GM18951 (cell line): ENCODE measurements at regions of chr22 and their contacts with region 1.

Region 1: DNA sequence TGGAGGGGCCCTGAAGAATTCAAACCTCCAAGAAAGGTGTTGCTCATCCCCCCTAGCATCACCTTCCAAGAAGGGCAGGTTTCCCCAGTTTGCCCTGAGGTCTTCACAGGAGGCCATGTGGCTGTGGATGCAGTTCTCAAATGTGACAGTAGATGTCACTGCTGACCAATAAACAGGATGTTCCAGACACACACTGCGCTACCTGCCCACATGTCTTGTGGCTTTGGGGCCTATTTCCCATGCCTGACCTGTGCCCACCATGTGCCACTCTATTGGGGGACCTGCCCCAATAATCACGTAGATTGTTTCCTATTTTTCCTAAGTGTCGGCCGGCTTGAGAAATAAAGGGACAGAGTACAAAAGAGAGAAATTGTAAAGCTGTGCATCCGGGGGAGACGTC is 4.5 kb downstream of the GSTT2 start:
- POLR2A ChIP-seq: no peak

Region 2: DNA sequence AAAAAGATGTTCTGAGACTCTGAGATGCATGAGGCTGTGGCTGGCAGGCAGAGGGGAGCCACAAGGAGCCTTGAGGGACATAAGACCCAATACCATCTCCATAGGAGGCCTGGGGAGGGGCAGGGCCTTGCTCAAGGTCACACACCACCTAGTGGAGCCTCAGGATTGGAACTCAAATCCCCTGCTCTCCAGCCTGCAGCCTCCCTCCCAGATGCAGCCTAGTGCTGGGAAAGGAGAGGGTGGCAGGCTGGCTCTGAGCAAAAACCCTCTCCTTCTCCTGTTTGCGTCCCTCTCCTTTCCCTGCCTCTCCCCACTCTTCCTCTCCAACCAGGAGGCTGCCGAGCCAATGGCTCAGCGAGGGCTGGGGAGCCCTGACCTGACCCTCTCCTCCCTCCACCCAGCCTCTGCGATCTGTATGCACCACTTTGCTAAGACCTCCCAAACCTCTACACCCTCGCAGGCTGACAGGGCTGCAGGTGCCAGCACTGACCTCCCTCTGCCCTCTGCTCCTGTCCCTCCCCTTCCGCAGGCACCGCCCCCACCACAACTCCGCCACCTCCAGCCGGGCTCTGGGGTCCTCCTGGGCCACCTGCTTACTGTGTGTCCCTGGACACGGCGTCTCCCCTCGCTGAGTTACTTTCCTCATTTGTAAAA is 419.0 kb before region 1 on chr22:
- in situ Hi-C with region 1: no loop called
- POLR2A ChIP-seq: no peak

Region 3: GRCh38 chr22:24175160-24175808 is 190.9 kb after region 1 on chr22:
- in situ Hi-C with region 1: loop called (anchors 25 kb)
- POLR2A ChIP-seq: no peak

Region 4: DNA sequence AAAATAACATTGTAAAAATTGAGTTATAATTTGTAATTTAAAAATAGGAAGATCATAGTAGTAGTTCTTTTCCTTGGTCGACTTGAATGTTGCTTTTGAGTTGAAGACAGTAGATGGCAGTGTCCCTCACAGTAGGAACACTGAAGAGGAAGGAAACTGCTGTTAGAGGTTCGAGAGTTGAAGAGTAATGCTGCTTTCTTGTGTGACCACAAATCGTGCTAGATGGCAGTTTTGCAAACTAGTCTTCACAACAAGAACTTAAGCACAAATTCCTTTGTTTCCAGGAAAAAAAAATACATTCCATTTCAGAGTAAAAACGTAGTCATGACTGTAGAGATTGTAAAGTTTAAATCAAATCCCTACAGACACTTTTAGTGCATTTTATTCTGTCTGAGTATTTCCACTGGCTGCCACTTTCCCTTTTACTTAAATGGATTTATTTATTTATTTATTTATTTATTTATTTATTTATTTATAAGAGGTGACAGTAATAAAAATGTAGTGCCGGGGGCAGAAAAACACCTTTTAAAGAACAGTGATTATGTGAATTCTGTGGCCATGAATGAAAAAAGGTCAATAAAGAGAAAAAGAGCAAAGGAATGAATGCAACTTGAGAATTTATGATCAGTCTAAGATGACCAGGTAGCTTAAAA is 340.8 kb after region 1 on chr22:
- in situ Hi-C with region 1: no loop called
- POLR2A ChIP-seq: no peak